Activated CD4-positive, alpha-beta memory T cell treated with anti-CD3 and anti-CD28 coated beads for 36 hours (primary cell): ENCODE measurements at regions of chr2 and their contacts with region 1.

Region 1: DNA sequence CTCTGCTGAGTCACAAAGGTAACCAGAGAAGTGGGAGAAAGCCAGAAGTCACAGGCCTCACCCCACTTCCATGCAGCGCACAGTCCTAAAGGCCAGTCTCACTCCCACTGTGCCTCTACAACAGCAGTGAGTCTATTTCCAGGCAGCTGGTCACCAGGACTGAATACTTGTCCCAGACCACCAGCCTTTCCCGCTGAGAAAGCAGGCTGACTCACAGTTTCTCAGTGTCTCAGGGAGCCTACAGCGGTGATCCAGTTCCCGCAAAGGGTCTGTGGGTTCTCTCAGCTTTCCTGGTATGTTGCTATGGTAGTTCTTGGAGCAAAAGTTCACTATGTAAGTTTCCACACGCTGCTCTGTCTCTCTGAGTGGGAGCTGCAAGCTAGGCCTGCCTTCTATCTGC is 622.5 kb downstream of the RNF144A start:
- DNase-seq: no peak
- H3K4me3 Mint-ChIP-seq: peak overlapping the region; percentile 20
- H3K27ac Mint-ChIP-seq: peak overlapping the region; percentile 43
- H3K4me1 Mint-ChIP-seq: peaks cover 40% of the 10 kb centered on the region
- H3K27me3 Mint-ChIP-seq: no peaks in the 10 kb centered on the region

Region 2: GRCh38 chr2:7552825-7553570 is 13.2 kb after region 1 on chr2:
- CTCF ChIA-PET with region 1: interaction called, 3 read pairs
- POLR2A ChIA-PET with region 1: no interaction called
- intact Hi-C with region 1: loop called (anchors 1 kb)
- DNase-seq: peak; percentile 14
- H3K4me3 Mint-ChIP-seq: peak overlapping the region; percentile 20
- H3K27ac Mint-ChIP-seq: peak overlapping the region; percentile 57
- H3K4me1 Mint-ChIP-seq: peaks cover 24% of the 10 kb centered on the region
- H3K27me3 Mint-ChIP-seq: no peaks in the 10 kb centered on the region

Region 3: GRCh38 chr2:7633566-7634153 is 93.9 kb after region 1 on chr2:
- CTCF ChIA-PET with region 1: no interaction called
- POLR2A ChIA-PET with region 1: no interaction called
- intact Hi-C with region 1: no loop called
- DNase-seq: no peak
- H3K4me3 Mint-ChIP-seq: no peak overlapping the region
- H3K27ac Mint-ChIP-seq: no peak overlapping the region
- H3K4me1 Mint-ChIP-seq: no peaks in the 10 kb centered on the region
- H3K27me3 Mint-ChIP-seq: no peaks in the 10 kb centered on the region